Dorsolateral prefrontal cortex (tissue), 120 donors: ENCODE measurements at regions of chrX and their contacts with region 1.

Region 1: DNA sequence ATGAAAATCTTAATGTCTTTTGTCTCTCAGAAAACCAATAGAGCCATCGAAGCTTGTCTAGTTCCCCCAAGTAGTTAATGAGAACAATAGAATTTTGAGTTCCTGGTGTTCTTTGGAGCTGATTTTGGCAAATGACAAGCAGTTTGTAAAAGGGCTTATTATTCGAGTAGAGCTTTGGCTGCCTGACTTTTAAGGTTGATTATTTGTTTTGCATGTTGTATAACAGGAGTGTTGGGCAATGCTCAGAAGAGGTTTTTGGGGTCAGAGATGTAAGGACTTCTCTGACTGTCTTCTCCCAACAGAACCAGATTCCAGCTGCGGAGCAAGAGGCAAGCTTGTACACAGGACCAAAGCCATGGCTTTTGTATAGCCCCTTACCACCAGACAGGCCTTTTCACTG is 30.0 kb downstream of the ZCCHC12 start:
- DNase-seq: no peak
- H3K4me3 ChIP-seq: no peak overlapping the region
- H3K27ac ChIP-seq: peak overlapping the region in 23 of 59 donors; percentile 5 to 70 (median 26)
- H3K27me3 ChIP-seq: peaks cover 0 to 46% (median 8%) of the 10 kb centered on the region in 45 donors
- CTCF ChIP-seq: no peak

Region 2: DNA sequence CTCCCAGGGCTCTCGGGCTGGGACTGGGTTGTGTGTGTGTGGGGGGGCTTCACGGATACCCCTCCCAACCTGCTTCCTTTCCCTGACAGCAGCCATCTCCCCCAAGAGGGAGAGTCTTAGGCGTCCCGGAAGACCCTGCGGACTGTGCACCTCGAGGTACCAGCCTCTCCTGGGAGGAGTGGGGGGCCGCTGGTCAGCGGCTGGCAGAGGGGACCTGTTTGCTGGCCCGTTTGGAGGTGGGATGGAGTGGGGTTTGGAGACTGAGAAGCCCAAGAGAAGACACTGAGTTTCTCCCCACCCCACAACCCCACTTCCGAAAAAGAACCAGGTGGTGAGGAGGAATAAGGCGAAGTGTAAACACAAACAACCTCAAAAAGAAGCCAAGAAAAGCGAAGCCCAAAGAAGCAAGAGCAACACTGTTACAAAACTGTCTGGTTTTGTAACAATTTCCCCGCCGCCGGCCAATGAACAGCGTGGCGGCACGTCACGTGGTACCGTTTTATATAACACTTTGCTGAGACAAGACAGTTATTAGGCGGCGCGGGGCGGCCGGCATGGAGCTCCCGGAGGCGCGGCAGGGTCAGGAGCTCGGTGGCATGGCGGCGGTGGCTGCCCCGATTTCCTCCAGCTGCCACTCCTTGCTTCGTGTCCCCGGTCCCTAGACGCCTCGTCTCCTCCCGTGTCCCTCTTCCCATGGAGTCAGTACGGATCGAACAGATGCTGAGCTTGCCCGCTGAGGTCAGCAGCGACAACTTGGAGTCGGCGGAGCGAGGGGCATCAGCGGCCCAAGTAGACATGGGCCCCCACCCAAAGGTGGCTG is 120.7 kb after region 1 on chrX and contains the start of gene LONRF3:
- intact Hi-C with region 1: loop called (anchors 10 kb)
- DNase-seq: peak; percentile 54 to 79 (median 69)
- H3K4me3 ChIP-seq: peak within 1 kb of the TSS; percentile 25 to 73 (median 58)
- H3K27ac ChIP-seq: peak within 1 kb of the TSS in 20 of 59 donors; percentile 10 to 74 (median 37)
- H3K27me3 ChIP-seq: peaks cover 0 to 71% (median 16%) of the 10 kb centered on the region in 45 donors
- CTCF ChIP-seq: peak in 1 of 56 donors; percentile 16
- total RNA-seq, gene LONRF3: 2.8 to 18.1 (median 6.8) TPM

Region 3: DNA sequence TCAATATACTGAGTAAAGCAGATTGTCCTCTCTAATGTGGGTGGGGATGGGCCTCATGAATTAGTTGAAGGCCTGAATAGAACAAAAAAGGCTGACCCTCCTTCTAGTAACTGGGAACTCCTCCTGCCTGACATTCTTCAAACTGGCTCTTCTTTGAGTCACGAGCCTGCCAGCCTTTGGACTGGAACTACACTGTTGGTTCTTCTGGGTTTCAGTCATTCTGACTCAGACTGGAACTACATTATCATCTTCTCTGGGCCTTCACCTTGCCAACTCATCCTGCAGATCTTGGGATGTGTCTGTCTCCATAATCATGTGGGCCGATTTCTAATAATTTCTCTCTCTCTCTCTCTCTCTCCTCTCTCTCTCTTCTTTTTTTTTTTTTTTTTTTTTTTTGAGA is 192.3 kb after region 1 on chrX:
- intact Hi-C with region 1: no loop called
- DNase-seq: no peak
- H3K4me3 ChIP-seq: no peak overlapping the region
- H3K27ac ChIP-seq: no peak overlapping the region
- H3K27me3 ChIP-seq: peaks cover 0 to 54% (median 9%) of the 10 kb centered on the region in 45 donors
- CTCF ChIP-seq: no peak